Upper lobe of right lung (tissue), 1 donor: ENCODE measurements at regions of chr19 and their contacts with region 1.

Region 1: GRCh38 chr19:7293795-7294570 is at the start of gene INSR:
- DNase-seq: peak; percentile 94
- ATAC-seq: peak; percentile 97
- H3K4me3 ChIP-seq: peak within 1 kb of the TSS; percentile 80
- H3K27ac ChIP-seq: peak within 1 kb of the TSS; percentile 84
- H3K4me1 ChIP-seq: peaks cover 14% of the 10 kb centered on the region
- H3K27me3 ChIP-seq: no peaks in the 10 kb centered on the region
- CTCF ChIP-seq: no peak
- total RNA-seq, gene INSR: 37.5 TPM

Region 2: GRCh38 chr19:7197760-7198696 is 96.0 kb before region 1 on chr19:
- intact Hi-C with region 1: loop called (anchors 10 kb)
- DNase-seq: peak; percentile 96
- ATAC-seq: peak; percentile 97
- H3K4me3 ChIP-seq: peak overlapping the region; percentile 75
- H3K27ac ChIP-seq: peak overlapping the region; percentile 45
- H3K4me1 ChIP-seq: no peaks in the 10 kb centered on the region
- H3K27me3 ChIP-seq: no peaks in the 10 kb centered on the region
- CTCF ChIP-seq: peak; percentile 32